ENCODE measurements at regions of chr13 and their contacts with region 1.

Region 1: GRCh38 chr13:51590971-51591627 is 6.8 kb downstream of the WDFY2 start:
- DNase-seq: no peak
- ATAC-seq: peak; percentile 30; the same call in 1 of the 2 replicates
- H3K4me3 ChIP-seq: no peak overlapping the region
- H3K27ac ChIP-seq: no peak overlapping the region
- H3K4me1 ChIP-seq: peaks cover 7 to 12% of the 10 kb centered on the region in 2 experiments; a peak in 3 of 4 replicates
- H3K27me3 ChIP-seq: no peaks in the 10 kb centered on the region
- CTCF ChIP-seq: no peak
- POLR2A ChIP-seq: no peak
- RAD21 ChIP-seq: no peak

Region 2: DNA sequence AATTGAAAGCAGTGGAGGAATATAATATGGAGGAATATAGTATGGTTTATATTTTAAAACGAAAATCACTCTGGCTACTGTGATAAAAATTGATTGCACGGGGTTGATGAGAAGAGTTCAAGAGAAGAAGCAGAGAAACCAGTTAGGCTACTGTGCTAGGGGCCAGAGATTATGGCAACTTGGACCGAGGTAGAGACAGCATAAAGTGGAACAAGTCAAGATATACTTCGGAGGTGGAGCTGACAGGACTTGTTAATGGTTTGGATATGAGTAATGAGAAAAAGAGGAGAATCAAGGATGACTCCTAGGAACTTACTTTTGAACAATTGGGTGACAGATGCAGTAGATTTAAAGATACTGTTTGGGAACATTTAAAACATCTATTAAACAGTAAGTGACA is 13.4 kb before region 1 on chr13:
- CTCF ChIA-PET with region 1: no interaction called
- POLR2A ChIA-PET with region 1: no interaction called
- RAD21 ChIA-PET with region 1: no interaction called
- intact Hi-C with region 1: no loop called
- DNase-seq: no peak
- ATAC-seq: no peak
- H3K4me3 ChIP-seq: no peak overlapping the region
- H3K27ac ChIP-seq: no peak overlapping the region
- H3K4me1 ChIP-seq: no peaks in the 10 kb centered on the region
- H3K27me3 ChIP-seq: no peaks in the 10 kb centered on the region
- CTCF ChIP-seq: no peak
- POLR2A ChIP-seq: no peak
- RAD21 ChIP-seq: no peak

Region 3: GRCh38 chr13:51632591-51633362 is 41.7 kb after region 1 on chr13:
- CTCF ChIA-PET with region 1: no interaction called
- POLR2A ChIA-PET with region 1: no interaction called
- RAD21 ChIA-PET with region 1: no interaction called
- intact Hi-C with region 1: no loop called
- DNase-seq: no peak
- ATAC-seq: no peak
- H3K4me3 ChIP-seq: no peak overlapping the region
- H3K27ac ChIP-seq: no peak overlapping the region
- H3K4me1 ChIP-seq: peaks cover 0 to 20% of the 10 kb centered on the region in 2 experiments; a peak in 2 of 4 replicates
- H3K27me3 ChIP-seq: no peaks in the 10 kb centered on the region
- CTCF ChIP-seq: no peak
- POLR2A ChIP-seq: no peak
- RAD21 ChIP-seq: no peak

Region 4: DNA sequence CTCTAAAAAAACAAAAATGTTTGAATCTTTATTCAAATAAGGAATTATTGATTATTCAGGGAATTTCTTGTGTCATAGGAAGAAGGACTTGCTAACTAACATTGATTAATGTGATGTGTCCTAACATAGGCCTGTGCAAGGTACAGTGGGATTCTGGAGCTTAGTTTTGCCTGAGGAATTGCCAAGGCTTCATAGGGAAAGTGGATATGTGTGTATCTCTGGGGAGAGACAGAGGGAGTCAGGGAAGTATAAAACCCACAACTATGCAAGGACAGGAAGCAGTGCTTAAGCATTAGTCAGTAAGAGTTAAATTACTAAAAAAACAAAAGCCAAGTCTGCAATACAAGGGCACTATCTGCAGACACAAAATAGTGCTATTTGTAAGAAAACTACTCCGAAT is 52.8 kb after region 1 on chr13:
- CTCF ChIA-PET with region 1: no interaction called
- POLR2A ChIA-PET with region 1: no interaction called
- RAD21 ChIA-PET with region 1: no interaction called
- intact Hi-C with region 1: loop called (anchors 5 kb)
- DNase-seq: peak; percentile 68
- ATAC-seq: peak; percentile 92
- H3K4me3 ChIP-seq: peak overlapping the region; percentile 4 to 47; a peak in 2 of 4 replicates
- H3K27ac ChIP-seq: peak overlapping the region; percentile 63
- H3K4me1 ChIP-seq: peaks cover 31 to 37% of the 10 kb centered on the region in 2 experiments
- H3K27me3 ChIP-seq: no peaks in the 10 kb centered on the region
- CTCF ChIP-seq: no peak
- POLR2A ChIP-seq: no peak
- RAD21 ChIP-seq: no peak; the same call in 1 of the 2 replicates

Measured in HCT116 (cell line).